Heart right ventricle (tissue), 16 donors: ENCODE measurements at regions of chr3 and their contacts with region 1.

Region 1: GRCh38 chr3:134517791-134518190 is 31.9 kb downstream of the CEP63 start:
- DNase-seq: no peak
- ATAC-seq: no peak
- H3K4me3 ChIP-seq: no peak overlapping the region
- H3K27ac ChIP-seq: peak overlapping the region in 3 of 10 donors; percentile 5 to 46 (median 27)
- H3K4me1 ChIP-seq: peaks cover 0 to 25% (median 0%) of the 10 kb centered on the region in 9 donors
- H3K27me3 ChIP-seq: no peaks in the 10 kb centered on the region
- CTCF ChIP-seq: no peak

Region 2: DNA sequence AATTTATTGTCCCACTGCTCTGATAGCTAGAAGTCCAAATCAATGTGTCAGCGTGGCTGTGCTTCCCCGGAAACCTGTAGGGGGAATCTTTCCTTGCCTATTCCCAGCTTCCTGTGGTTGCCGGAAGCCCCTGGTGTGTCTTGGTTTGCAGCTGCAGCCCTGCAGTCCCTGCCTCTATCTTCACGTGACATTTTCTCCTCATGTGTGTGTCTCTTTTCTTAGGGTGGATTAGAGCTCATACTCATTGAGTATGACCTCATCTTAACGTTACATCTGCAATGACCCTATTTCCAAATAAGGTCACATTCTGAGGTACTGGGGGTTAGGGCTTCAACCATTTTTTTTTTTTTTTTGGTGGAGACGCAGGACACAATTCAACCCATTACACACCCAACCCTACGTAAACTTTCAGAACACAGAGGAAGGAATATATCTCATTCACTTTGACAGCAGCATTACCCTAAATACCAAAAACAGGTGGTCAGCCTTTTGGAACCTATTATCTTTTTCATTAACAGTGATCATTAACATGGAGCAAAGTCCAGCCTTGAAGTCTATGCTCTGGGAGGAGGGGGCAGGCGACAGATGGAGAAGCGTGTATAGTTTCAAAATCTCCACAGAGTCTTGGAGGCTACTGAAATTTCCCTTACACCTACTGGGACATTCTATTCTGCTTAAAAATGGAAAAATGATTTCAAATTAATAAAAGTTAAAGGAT is 355.7 kb before region 1 on chr3:
- intact Hi-C with region 1: no loop called
- DNase-seq: no peak
- ATAC-seq: no peak
- H3K4me3 ChIP-seq: no peak overlapping the region
- H3K27ac ChIP-seq: no peak overlapping the region
- H3K4me1 ChIP-seq: no peaks in the 10 kb centered on the region
- H3K27me3 ChIP-seq: no peaks in the 10 kb centered on the region
- CTCF ChIP-seq: no peak

Region 3: DNA sequence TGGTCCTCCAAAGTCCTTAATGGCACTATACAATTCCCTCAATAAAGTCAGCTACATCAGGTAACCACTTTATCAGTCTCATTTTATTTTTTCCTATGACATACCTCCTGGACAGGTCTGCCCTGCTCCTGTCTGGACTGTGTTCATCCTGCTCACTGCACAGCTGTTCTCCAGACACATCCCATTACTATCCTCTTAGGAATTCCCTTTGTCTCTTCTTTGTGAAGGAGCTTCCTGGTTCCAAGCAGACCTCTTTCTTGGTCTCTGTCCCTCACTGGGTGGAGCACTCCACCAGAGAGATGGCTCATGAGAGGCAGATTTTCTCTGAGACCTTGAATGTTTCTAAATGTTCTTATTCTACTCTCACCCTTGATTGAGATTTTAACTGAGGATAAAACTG is 73.0 kb after region 1 on chr3:
- intact Hi-C with region 1: loop called in 1 of 10 experiments (anchors 2 kb)
- DNase-seq: no peak
- ATAC-seq: no peak
- H3K4me3 ChIP-seq: no peak overlapping the region
- H3K27ac ChIP-seq: peak overlapping the region in 1 of 10 donors; percentile 47
- H3K4me1 ChIP-seq: no peaks in the 10 kb centered on the region
- H3K27me3 ChIP-seq: peaks cover 0 to 4% (median 0%) of the 10 kb centered on the region in 7 donors
- CTCF ChIP-seq: no peak